Caki2 (cell line): ENCODE measurements at regions of chr20 and their contacts with region 1.

Region 1: DNA sequence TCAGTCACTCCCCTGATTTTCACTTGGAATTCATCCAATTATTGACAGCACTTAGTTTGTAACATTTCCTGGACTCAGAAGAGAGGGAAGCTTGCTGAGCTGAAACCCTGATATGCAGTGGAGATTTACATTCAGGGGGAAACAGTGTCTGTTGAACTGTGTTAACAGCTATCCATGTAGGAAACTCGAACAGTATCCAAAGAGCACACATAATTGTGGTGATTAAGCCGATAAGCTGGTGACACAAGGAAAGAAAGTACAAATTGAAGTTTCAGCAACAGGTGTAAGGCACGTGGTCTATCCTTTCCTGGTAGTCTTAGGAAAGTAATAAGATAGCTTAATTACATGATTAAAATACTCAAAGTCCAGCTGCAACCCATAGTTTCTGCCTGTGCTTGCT is 78.1 kb upstream of the FLRT3 start:
- DNase-seq: no peak

Region 2: DNA sequence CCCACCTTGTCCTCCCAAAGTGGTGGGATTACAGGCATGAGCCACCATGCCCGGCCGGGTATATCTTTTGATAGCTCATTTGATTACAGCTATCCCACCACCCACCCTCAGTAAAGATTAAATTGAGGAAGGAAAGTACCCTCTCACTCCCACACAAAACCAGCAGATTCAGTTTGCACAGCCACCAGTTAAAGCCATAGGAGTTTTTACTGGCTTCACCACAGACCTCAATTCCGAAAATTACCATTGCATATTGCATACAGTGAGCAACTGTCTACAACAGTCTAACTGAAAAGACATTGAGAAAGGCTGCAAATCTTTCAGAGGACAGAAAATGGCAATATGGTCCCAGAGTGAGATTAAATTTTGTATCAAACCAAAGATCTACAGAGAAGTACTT is 665.7 kb before region 1 on chr20:
- in situ Hi-C with region 1: no loop called
- DNase-seq: no peak

Region 3: DNA sequence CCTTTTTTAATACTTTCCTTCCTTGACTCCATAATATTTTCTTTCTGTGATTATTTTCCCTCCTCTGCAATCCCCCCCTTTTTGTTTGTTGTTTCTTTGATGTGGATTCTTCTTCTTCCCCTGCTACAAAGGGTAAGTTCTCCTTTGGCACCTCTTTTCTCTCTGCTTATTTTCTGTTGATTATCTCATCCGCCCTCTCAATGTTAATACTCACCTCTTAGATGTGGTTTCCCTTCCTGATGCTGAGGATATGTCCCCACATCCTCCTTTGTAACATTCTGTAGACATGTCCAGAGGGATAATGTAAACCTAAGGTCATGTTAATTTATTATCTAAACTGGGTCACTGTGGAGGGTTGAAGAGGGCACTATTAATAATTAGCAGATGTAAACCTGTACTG is 95.8 kb before region 1 on chr20:
- in situ Hi-C with region 1: no loop called
- DNase-seq: no peak

Region 4: GRCh38 chr20:14477125-14477524 is 61.6 kb after region 1 on chr20:
- in situ Hi-C with region 1: loop called (anchors 10 kb)
- DNase-seq: peak; percentile 87